Activated CD4-positive, alpha-beta T cell treated with anti-CD3 and anti-CD28 coated beads, Interleukin-2, amount 10 ng/mL, durations not matched to agents 24 days and 14 days (primary cell): ENCODE measurements at regions of chr6 and their contacts with region 1.

Region 1: DNA sequence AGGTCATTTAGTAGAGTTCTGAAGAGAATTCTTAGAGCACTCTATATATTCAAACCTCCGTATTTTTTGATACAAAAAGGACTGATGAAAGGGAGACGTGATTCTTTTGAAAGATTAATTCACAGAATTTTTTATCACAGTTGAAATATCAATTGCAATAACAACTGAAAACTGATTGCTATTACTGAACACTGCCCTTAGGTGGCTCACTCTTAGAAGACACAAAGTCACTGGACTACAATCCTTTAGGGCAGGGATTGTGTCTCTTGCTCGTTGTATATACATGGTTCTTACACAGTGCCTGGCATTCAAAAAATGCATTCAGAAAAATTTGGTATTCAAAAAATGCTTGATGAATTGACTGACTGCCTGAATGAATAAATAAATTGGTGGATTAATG is 17.1 kb upstream of the CALHM6 start:
- DNase-seq: peak; percentile 63
- H3K4me3 Mint-ChIP-seq: no peak overlapping the region
- H3K27ac Mint-ChIP-seq: no peak overlapping the region
- H3K4me1 Mint-ChIP-seq: peaks cover 18% of the 10 kb centered on the region
- H3K27me3 Mint-ChIP-seq: peaks cover 27% of the 10 kb centered on the region

Region 2: GRCh38 chr6:115680621-115681020 is 763.5 kb before region 1 on chr6:
- intact Hi-C with region 1: no loop called
- DNase-seq: no peak
- H3K4me3 Mint-ChIP-seq: no peak overlapping the region
- H3K27ac Mint-ChIP-seq: no peak overlapping the region
- H3K4me1 Mint-ChIP-seq: no peaks in the 10 kb centered on the region
- H3K27me3 Mint-ChIP-seq: no peaks in the 10 kb centered on the region

Region 3: DNA sequence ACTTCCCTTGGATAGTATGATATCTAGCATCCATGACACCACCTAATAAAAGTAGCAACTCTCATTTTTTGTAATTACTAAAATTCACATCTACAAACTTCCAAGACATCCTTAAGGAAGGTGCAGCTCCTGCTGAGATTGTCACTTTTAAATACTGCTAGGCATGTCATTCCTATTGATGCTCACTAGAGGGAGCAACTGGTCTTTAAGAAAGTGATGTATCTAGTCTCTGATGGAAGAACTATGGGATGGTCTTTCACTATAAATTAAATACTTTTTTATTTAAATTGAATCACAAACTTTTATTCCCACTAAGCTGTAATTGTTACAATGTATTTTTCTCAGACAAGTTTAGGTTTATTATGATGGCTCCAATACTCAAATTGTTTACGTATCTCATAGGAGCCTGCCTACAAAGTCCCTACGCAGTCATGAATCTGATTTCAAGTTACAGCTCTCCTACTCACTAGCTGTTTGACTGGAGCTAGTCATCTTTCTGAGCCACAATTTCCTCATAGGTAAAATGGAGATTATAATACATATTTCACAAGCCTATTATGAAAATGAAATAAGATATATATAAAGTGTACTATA is 156.3 kb before region 1 on chr6:
- intact Hi-C with region 1: loop called (anchors 5 kb)
- DNase-seq: peak; percentile 63
- H3K4me3 Mint-ChIP-seq: no peak overlapping the region
- H3K27ac Mint-ChIP-seq: no peak overlapping the region
- H3K4me1 Mint-ChIP-seq: no peaks in the 10 kb centered on the region
- H3K27me3 Mint-ChIP-seq: peaks cover 9% of the 10 kb centered on the region

Region 4: GRCh38 chr6:116461932-116462885 is 18.1 kb after region 1 on chr6:
- intact Hi-C with region 1: loop called (anchors 2 kb)
- DNase-seq: peak; percentile 91
- H3K4me3 Mint-ChIP-seq: peak overlapping the region; percentile 75
- H3K27ac Mint-ChIP-seq: peak overlapping the region; percentile 85
- H3K4me1 Mint-ChIP-seq: peaks cover 76% of the 10 kb centered on the region
- H3K27me3 Mint-ChIP-seq: no peaks in the 10 kb centered on the region

Region 5: GRCh38 chr6:116476002-116476678 is 32.0 kb after region 1 on chr6:
- intact Hi-C with region 1: loop called (anchors 5 kb)
- DNase-seq: peak; percentile 85
- H3K4me3 Mint-ChIP-seq: peak overlapping the region; percentile 30
- H3K27ac Mint-ChIP-seq: peak overlapping the region; percentile 68
- H3K4me1 Mint-ChIP-seq: peaks cover 23% of the 10 kb centered on the region
- H3K27me3 Mint-ChIP-seq: peaks cover 9% of the 10 kb centered on the region

Region 6: GRCh38 chr6:116615937-116616736 is 172.0 kb after region 1 on chr6 and contains the start of gene RSPH4A:
- intact Hi-C with region 1: no loop called
- DNase-seq: peak; percentile 92
- H3K4me3 Mint-ChIP-seq: peak within 1 kb of the TSS; percentile 85
- H3K27ac Mint-ChIP-seq: no peak within 1 kb of the TSS
- H3K4me1 Mint-ChIP-seq: peaks cover 15% of the 10 kb centered on the region
- H3K27me3 Mint-ChIP-seq: peaks cover 51% of the 10 kb centered on the region
- total RNA-seq, gene RSPH4A: 0.14 and 0.21 TPM in 2 replicates